Activated CD4-positive, alpha-beta memory T cell treated with anti-CD3 and anti-CD28 coated beads for 36 hours (primary cell): ENCODE measurements at regions of chr6 and their contacts with region 1.

Region 1: GRCh38 chr6:36615018-36615761 is 21.0 kb downstream of the SRSF3 start:
- DNase-seq: peak; percentile 70
- H3K4me3 Mint-ChIP-seq: no peak overlapping the region
- H3K27ac Mint-ChIP-seq: peak overlapping the region; percentile 66
- H3K4me1 Mint-ChIP-seq: peaks cover 18% of the 10 kb centered on the region
- H3K27me3 Mint-ChIP-seq: no peaks in the 10 kb centered on the region

Region 2: GRCh38 chr6:36402481-36402880 is 212.7 kb before region 1 on chr6:
- CTCF ChIA-PET with region 1: no interaction called
- POLR2A ChIA-PET with region 1: no interaction called
- intact Hi-C with region 1: no loop called
- DNase-seq: no peak
- H3K4me3 Mint-ChIP-seq: no peak overlapping the region
- H3K27ac Mint-ChIP-seq: no peak overlapping the region
- H3K4me1 Mint-ChIP-seq: no peaks in the 10 kb centered on the region
- H3K27me3 Mint-ChIP-seq: peaks cover 7% of the 10 kb centered on the region

Region 3: DNA sequence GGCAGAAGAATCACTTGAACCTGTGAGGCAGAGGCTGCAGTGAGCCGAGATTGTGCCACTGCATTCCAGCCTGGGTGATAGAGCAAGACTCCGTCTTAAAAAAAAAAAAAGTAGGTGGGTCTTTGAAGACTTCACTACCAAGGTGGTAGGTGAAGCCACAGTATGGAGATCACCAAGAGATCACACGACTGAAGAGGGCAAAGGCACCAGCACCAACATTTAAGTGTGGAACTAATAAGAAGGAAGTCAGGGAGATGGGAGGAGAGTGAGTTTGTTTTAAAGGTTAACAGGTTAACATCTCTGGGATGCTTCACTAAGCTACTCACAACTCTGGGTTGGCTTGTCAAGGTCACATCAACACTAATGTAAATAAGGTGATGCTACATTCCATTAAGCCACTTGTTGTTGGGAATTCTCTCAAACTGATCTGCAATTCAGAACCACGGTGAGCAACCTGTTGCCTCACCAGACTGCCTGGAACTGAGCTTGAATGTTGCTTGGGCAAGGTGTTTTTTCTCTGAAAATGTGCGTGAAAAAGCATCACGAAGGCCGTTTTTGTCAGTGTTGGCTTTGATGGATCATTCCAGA is 123.7 kb before region 1 on chr6:
- CTCF ChIA-PET with region 1: no interaction called
- POLR2A ChIA-PET with region 1: no interaction called
- intact Hi-C with region 1: no loop called
- DNase-seq: no peak
- H3K4me3 Mint-ChIP-seq: no peak overlapping the region
- H3K27ac Mint-ChIP-seq: peak overlapping the region; percentile 39
- H3K4me1 Mint-ChIP-seq: peaks cover 32% of the 10 kb centered on the region
- H3K27me3 Mint-ChIP-seq: no peaks in the 10 kb centered on the region

Region 4: DNA sequence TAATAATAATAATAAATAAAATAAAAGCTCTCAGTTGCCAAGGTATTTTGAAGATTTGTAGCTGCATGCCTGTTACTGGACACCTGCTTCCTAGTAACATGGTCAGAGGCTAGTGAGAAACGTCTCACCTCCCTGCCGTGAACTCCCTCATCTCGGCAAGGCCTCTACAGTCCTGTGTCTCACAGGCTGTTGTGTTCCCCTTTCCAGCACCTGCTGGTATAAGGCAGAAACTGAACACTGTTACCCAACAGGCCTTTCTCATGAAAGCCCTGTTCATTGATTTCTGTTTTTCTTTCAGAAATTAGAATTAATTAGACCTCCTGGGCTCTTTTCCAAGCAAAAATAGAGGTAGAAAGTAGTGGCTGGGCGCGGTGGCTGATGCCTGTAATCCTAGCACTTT is 38.6 kb before region 1 on chr6:
- CTCF ChIA-PET with region 1: no interaction called
- POLR2A ChIA-PET with region 1: no interaction called
- intact Hi-C with region 1: no loop called
- DNase-seq: no peak
- H3K4me3 Mint-ChIP-seq: no peak overlapping the region
- H3K27ac Mint-ChIP-seq: no peak overlapping the region
- H3K4me1 Mint-ChIP-seq: peaks cover 4% of the 10 kb centered on the region
- H3K27me3 Mint-ChIP-seq: no peaks in the 10 kb centered on the region

Region 5: DNA sequence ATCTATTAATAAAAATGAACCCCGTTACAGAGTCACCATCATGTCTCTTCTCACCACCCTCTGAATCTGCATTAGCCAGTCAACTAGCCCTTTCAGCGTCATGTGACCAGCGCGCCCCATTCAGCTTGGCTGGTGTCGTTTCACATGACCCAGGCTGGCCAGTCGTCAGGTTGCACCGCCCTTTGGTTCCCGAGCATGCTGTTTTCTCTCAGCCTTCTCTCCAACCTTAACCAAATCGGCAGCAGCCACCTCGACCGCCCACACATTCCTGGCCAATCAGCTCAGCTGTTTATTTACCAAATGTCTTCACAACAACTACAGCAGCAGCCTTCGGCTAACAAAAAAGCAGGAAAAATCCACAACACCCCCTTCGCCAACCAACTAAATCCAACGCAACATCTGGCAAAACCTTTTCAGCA is 15.4 kb before region 1 on chr6:
- CTCF ChIA-PET with region 1: interaction called, 12 read pairs
- POLR2A ChIA-PET with region 1: interaction called, 73 read pairs
- intact Hi-C with region 1: no loop called
- DNase-seq: peak; percentile 88
- H3K4me3 Mint-ChIP-seq: peak overlapping the region; percentile 96
- H3K27ac Mint-ChIP-seq: peak overlapping the region; percentile 77
- H3K4me1 Mint-ChIP-seq: peaks cover 64% of the 10 kb centered on the region
- H3K27me3 Mint-ChIP-seq: no peaks in the 10 kb centered on the region

Region 6: DNA sequence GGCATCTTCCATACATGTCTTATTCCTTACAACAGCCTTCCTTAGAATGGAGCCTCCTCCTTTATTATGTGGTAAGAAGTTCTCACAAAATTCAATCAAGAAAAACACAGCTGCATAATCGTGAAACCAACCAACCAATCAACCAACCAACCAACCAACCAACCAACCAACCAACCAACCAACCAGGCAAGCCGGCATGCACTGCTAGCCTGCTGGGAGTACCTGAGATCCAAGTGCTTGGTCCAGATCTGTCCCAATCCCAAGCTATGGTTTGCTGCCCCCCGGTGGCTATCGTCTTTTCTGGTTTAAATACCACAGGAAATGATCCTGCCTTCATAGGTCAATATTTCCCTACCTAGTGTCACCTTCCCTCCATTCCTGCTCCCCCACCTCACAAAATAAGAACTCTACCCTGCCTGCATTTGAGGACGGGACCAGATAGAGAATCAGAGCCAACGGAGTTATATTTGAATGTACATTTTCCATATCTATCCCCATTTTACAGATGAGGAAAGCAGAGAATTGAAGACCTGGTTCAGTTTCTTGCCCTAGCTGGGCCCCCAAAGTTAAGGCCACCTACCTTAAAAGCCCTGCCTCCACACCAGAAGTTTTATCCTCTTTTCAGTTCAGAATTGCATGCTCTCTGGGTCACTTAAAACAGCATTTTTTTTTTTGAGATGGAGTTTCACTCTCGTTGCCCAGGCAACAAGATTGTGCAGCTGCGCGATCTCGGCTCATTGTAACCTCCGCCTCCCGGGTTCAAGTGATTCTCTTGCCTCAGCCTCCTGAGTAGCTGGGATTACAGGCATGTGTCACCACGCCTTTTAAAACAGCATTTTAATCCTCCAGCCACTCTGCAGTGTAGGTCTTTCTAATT is 109.6 kb after region 1 on chr6:
- CTCF ChIA-PET with region 1: interaction called, 14 read pairs
- POLR2A ChIA-PET with region 1: no interaction called
- intact Hi-C with region 1: no loop called
- DNase-seq: peak; percentile 79
- H3K4me3 Mint-ChIP-seq: no peak overlapping the region
- H3K27ac Mint-ChIP-seq: no peak overlapping the region
- H3K4me1 Mint-ChIP-seq: peaks cover 20% of the 10 kb centered on the region
- H3K27me3 Mint-ChIP-seq: no peaks in the 10 kb centered on the region

Region 7: DNA sequence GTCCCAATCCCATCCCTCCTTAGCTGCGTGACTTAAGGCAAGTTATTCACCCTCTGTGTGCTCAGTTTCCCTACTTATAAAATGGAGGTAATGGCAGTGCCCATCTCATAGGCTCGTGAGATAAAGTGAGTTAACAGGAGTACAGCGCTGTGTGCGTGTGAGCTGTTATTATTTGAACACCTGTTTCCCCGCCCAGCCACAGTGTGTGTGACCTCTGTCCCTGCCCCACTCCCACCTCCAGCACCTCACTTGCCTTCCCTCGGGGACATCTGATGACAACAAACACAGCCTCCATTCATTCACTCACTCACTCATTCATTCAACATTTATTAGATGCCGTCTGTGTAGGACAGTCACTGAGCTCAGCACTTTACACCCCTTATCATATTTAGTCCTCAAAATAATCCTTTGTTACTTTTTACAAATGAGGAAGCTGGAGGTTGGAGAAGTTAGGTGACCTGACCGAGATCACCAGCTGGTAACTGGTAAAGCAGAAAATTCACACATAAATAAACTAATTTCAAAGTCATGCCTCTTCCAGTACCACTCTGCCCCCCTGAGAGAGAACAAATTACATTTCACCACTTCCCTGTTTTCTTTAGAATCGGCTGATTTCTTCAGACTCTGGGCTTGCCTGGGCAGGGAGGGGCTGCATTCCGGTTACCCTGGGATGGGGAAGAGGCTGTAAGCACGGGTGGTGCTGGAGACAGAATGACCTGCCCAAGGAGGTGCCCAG is 165.4 kb after region 1 on chr6:
- CTCF ChIA-PET with region 1: interaction called, 23 read pairs
- POLR2A ChIA-PET with region 1: no interaction called
- intact Hi-C with region 1: no loop called
- DNase-seq: no peak
- H3K4me3 Mint-ChIP-seq: no peak overlapping the region
- H3K27ac Mint-ChIP-seq: no peak overlapping the region
- H3K4me1 Mint-ChIP-seq: peaks cover 2% of the 10 kb centered on the region
- H3K27me3 Mint-ChIP-seq: no peaks in the 10 kb centered on the region